ENCODE measurements at regions of chr12 and their contacts with region 1.

Region 1: DNA sequence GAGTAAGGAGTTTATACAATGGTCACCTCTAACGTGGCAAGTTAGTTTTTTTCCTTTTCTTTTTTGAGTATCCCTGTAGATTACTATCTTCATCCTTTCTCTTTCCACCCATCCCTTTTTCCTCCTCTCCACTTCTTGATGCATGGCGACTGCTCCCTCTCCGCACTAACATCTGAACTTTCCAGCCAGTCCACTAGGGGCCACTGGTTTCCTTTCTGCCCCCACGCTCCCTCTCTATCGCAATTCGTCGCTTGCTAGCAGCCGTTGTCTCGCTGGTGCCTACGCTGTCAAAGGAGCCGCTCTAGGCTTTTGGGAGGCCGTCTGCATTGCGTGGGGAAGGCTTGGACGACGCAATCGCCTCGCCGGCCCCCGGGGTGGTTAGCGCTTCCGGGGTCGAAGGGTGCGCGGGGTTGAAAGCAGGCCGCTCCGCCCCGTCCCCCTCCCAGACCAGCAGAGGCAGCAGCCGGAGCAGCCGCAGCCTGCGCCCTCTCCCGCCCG is at the start of gene PCBP2:
- DNase-seq: peak; percentile 98 to 99
- ATAC-seq: peak; percentile 97 to 98
- H3K4me3 ChIP-seq: peak within 1 kb of the TSS; percentile 73 to 90 (median 80)
- H3K27ac ChIP-seq: peak within 1 kb of the TSS; percentile 92 to 98 (median 98)
- H3K4me1 ChIP-seq: peaks cover 28 to 33% of the 10 kb centered on the region in 2 donors
- H3K27me3 ChIP-seq: no peaks in the 10 kb centered on the region
- CTCF ChIP-seq: peak; percentile 89 to 94 (median 93)
- POLR2A ChIP-seq: peak; percentile 80 to 83
- total RNA-seq, gene PCBP2: 113 to 257 (median 191) TPM

Region 2: DNA sequence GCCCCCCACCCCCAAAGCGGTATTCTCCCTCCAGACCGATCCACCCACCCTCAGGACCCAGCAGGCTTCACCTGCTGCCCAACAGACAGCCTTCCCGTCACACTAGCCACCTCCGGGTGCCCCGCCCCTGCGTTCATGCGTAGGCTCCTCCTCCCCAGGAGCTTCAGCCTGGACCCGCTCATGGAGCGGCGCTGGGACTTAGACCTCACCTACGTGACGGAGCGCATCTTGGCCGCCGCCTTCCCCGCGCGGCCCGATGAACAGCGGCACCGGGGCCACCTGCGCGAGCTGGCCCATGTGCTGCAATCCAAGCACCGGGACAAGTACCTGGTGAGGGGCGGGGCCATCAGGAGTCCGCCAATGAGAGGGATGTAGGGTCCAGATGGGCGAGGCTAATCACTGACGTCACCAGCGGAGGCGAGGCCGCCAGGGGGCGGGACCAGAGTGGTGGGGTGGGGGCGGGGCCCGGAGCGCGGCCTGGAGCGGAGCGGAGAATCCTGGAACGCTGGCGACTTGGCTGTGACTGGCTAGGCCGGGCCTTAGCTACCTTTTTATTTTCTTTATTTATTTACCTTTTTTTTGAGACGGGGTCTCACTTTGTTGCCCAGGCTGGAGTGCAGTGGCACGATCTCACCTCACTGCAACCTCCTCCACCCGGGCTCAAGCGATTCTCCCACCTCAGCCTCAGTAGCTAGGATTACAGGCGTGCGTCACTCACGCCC is 397.4 kb before region 1 on chr12:
- in situ Hi-C with region 1: no loop called
- intact Hi-C with region 1: loop called (anchors 10 kb)
- DNase-seq: peak; percentile 94 to 97
- ATAC-seq: peak; percentile 51 to 54
- H3K4me3 ChIP-seq: peak overlapping the region; percentile 83 to 97 (median 95)
- H3K27ac ChIP-seq: peak overlapping the region; percentile 99 to 100 (median 100)
- H3K4me1 ChIP-seq: peaks cover 38 to 49% of the 10 kb centered on the region in 2 donors
- H3K27me3 ChIP-seq: no peaks in the 10 kb centered on the region
- CTCF ChIP-seq: no peak
- POLR2A ChIP-seq: peak; percentile 89 to 91

Region 3: DNA sequence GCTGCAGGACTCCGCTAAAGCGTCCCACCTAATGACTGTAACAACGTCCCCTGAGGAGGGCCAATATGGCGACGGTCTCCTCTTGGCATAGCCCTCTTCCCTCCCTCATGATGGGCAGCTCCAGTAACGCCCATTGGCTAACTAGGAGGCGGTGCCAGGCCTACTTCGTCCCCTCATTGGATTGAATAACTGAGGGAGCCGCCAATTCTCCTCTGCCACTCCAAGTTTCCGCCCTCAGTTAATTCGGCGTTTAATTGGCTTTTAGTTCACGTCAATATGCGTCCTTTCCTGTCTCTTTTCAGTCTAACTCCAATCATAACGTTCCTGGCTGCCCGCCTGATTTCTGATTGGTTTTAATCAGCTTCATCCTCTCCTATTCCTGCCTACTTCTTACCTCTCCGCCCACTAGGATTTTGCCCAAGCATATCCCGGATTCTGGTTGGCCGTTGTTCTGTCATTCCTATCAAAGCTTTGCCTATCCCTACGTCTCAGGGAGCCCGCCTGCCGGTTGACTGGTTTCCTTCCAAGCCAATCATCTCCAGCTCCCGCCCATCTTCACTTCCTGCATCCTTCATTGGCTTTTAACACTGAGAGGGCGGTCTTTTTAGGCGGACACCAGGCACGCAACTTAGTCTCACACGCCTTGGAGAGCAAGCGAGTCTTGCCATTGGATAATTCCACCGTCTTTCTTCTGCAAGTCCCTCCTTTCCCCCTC is 72.2 kb before region 1 on chr12:
- in situ Hi-C with region 1: no loop called
- intact Hi-C with region 1: loop called (anchors 2 kb)
- DNase-seq: peak; percentile 100
- ATAC-seq: peak; percentile 84 to 89
- H3K4me3 ChIP-seq: peak overlapping the region; percentile 57 to 86 (median 66)
- H3K27ac ChIP-seq: peak overlapping the region; percentile 93 to 99 (median 96)
- H3K4me1 ChIP-seq: peaks cover 43 to 46% of the 10 kb centered on the region in 2 donors
- H3K27me3 ChIP-seq: no peaks in the 10 kb centered on the region
- CTCF ChIP-seq: no peak
- POLR2A ChIP-seq: peak; percentile 73 to 83

Region 4: DNA sequence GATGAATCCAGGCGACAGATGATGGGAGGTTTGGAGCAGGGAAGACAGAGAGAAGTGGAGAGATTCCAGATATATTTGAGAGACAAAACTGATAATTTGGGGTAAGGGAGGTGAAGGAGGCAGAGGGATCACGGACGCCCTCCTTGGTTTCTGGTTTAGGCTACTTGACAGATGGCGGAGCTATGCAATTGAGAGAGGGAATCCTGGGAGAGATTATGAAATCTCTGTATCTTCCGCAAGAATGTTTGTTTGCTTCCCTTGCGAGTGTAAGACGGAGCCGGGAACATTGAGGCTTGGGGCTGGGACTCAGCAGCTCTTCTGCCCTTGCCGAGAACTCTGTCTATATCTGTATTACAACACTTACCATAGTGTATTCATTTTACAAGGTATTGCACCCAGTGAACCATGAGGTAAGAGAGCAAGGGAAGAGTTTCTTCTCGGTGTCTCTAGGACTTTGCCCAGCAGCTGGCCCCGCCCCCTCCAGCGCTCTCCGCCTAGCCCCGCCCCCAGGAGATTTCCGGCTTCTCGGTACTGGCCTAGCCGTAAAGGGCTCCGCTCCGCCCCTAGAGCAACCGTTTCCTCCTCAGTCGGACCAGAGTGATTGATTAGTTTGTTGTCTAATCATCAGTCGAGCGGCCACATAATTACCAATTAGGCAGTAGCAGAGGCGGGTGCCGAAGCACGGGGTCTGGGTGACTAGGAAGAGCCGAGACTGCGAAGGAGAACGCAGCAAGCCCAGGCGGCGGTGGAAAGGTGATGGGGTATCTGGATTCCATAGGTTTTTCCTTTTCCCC is 10.5 kb before region 1 on chr12 and contains the start of gene PRR13:
- in situ Hi-C with region 1: no loop called
- intact Hi-C with region 1: loop called (anchors 1 kb)
- DNase-seq: peak; percentile 99
- ATAC-seq: peak; percentile 94 to 98
- H3K4me3 ChIP-seq: peak within 1 kb of the TSS; percentile 68 to 80 (median 78)
- H3K27ac ChIP-seq: peak within 1 kb of the TSS; percentile 87 to 94 (median 91)
- H3K4me1 ChIP-seq: peaks cover 12 to 13% of the 10 kb centered on the region in 2 donors
- H3K27me3 ChIP-seq: no peaks in the 10 kb centered on the region
- CTCF ChIP-seq: no peak
- POLR2A ChIP-seq: peak; percentile 89 to 97
- total RNA-seq, gene PRR13: 40.3 to 90.4 (median 74.2) TPM

Region 5: GRCh38 chr12:53478865-53479264 is 27.2 kb after region 1 on chr12:
- in situ Hi-C with region 1: no loop called
- intact Hi-C with region 1: loop called (anchors 2 kb)
- DNase-seq: no peak
- ATAC-seq: peak; percentile 2 to 8
- H3K4me3 ChIP-seq: no peak overlapping the region
- H3K27ac ChIP-seq: peak overlapping the region; percentile 75 to 86 (median 82)
- H3K4me1 ChIP-seq: peaks cover 44 to 48% of the 10 kb centered on the region in 2 donors
- H3K27me3 ChIP-seq: no peaks in the 10 kb centered on the region
- CTCF ChIP-seq: no peak
- POLR2A ChIP-seq: no peak

Region 6: GRCh38 chr12:53500776-53501614 is 49.3 kb after region 1 on chr12 and contains the start of gene TARBP2:
- in situ Hi-C with region 1: loop called in 1 of 4 experiments (anchors 10 kb)
- intact Hi-C with region 1: loop called (anchors 1 kb)
- DNase-seq: peak; percentile 99
- ATAC-seq: peak; percentile 89 to 93
- H3K4me3 ChIP-seq: peak within 1 kb of the TSS; percentile 73 to 84 (median 82)
- H3K27ac ChIP-seq: peak within 1 kb of the TSS; percentile 90 to 97 (median 92)
- H3K4me1 ChIP-seq: peaks cover 24 to 25% of the 10 kb centered on the region in 2 donors
- H3K27me3 ChIP-seq: no peaks in the 10 kb centered on the region
- CTCF ChIP-seq: peak in 1 of 5 experiments; percentile 25
- POLR2A ChIP-seq: peak; percentile 47 to 68
- total RNA-seq, gene TARBP2: 6.8 to 17.4 (median 11.6) TPM

Region 7: DNA sequence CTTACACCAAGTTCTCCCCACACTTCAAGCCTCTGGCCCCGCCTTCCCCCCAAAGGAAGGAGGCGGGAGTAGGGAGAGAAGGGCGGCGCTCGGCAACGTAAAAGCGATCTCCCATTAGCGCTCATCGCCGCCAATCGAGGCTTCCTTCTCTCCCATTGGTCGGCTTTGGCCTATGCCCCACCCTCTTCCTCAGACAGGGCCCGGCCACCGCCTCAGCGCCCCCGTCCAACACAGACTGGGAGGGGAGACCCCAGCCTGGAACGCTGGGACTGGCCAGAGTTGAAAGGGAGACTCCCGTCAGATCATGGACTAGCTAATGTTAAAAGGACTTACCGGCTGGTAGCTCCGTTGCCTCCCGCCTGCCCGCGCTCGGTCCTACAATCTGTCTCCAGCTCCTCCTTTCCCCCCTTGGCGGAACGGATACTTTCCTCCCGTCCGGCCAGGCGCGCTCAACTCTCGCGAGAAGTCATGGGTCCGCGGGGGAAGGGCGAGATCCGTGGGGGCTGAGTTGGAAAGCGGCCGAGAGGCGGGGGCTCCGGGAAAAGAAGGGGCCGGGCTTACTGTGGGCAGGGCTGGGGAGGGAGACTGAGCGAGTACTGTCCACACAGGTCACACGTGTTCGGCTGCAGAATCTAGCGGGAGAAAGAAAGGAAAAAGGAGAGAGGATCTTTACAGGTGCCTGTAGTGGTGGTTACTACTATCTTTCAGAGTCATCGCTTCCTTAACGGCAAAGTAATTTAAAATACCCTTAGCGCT is 174.4 kb after region 1 on chr12 and contains the start of gene ATF7:
- in situ Hi-C with region 1: no loop called
- intact Hi-C with region 1: loop called (anchors 2 kb)
- DNase-seq: peak; percentile 97 to 98
- ATAC-seq: peak; percentile 96 to 97
- H3K4me3 ChIP-seq: peak within 1 kb of the TSS; percentile 67 to 88 (median 78)
- H3K27ac ChIP-seq: peak within 1 kb of the TSS; percentile 93 to 96 (median 95)
- H3K4me1 ChIP-seq: peaks cover 36 to 40% of the 10 kb centered on the region in 2 donors
- H3K27me3 ChIP-seq: no peaks in the 10 kb centered on the region
- CTCF ChIP-seq: peak in 1 of 5 experiments; percentile 11
- POLR2A ChIP-seq: peak; percentile 57 to 69
- total RNA-seq, gene ATF7: 21.9 to 47.9 (median 26.3) TPM

Region 8: DNA sequence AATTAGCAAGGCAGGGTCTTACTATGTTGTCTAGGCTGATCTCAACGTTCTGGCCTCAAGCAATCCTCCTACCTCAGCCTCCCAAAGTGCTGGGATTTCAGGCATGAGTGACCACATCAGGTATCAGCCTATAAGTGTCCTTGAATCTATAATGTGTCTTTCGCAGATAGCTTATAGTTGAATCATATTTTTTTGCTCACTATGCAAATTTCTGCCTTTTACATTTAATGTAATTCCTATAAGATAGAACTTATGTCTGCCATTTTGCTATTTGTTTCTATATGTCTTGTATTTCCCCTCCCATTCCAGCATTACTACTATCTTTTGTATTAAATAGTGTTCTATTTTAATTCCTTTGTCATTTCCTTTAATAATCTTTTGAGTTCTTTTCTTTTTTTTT is 184.9 kb after region 1 on chr12:
- in situ Hi-C with region 1: no loop called
- intact Hi-C with region 1: no loop called
- DNase-seq: no peak
- ATAC-seq: no peak
- H3K4me3 ChIP-seq: no peak overlapping the region
- H3K27ac ChIP-seq: no peak overlapping the region
- H3K4me1 ChIP-seq: no peaks in the 10 kb centered on the region
- H3K27me3 ChIP-seq: no peaks in the 10 kb centered on the region
- CTCF ChIP-seq: no peak
- POLR2A ChIP-seq: no peak

Region 9: GRCh38 chr12:53956251-53956887 is 504.7 kb after region 1 on chr12:
- in situ Hi-C with region 1: no loop called
- intact Hi-C with region 1: no loop called
- DNase-seq: no peak
- ATAC-seq: no peak
- H3K4me3 ChIP-seq: no peak overlapping the region
- H3K27ac ChIP-seq: no peak overlapping the region
- H3K4me1 ChIP-seq: no peaks in the 10 kb centered on the region
- H3K27me3 ChIP-seq: peaks cover 92 to 100% (median 92%) of the 10 kb centered on the region in 3 donors
- CTCF ChIP-seq: no peak
- POLR2A ChIP-seq: no peak